ENCODE measurements at regions of chr5 and their contacts with region 1.

Region 1: GRCh38 chr5:63401436-63402046 is 560.7 kb downstream of the HTR1A start:
- DNase-seq: peak; percentile 5
- CTCF ChIP-seq: peak; percentile 75

Region 2: DNA sequence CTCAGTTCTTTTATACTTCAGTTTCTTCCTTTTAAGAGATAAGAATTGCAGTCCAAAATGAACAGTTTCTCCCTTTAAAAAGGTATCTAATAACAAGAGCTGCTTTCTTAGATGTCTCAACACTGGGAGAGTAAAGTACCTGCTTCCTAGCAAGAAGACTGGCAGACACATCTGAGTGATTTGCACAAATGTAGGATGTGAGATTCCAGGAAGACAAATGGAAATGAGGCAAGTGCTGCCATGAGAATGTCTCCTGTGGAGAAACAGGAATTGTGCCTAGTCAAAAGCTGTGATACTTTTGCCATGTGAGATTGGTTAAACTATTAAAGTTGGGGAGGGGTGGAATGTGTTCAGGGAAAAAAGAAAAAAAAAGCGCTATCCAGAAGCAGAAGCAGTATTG is 401.6 kb after region 1 on chr5:
- CTCF ChIA-PET with region 1: no interaction called
- POLR2A ChIA-PET with region 1: no interaction called
- DNase-seq: no peak
- CTCF ChIP-seq: no peak

Region 3: GRCh38 chr5:63963080-63963735 is 561.7 kb after region 1 on chr5:
- CTCF ChIA-PET with region 1: interaction called, 12 read pairs
- POLR2A ChIA-PET with region 1: no interaction called
- DNase-seq: peak; percentile 66
- CTCF ChIP-seq: peak; percentile 76